CD4-positive, alpha-beta T cell (primary cell): ENCODE measurements at regions of chr1 and their contacts with region 1.

Region 1: DNA sequence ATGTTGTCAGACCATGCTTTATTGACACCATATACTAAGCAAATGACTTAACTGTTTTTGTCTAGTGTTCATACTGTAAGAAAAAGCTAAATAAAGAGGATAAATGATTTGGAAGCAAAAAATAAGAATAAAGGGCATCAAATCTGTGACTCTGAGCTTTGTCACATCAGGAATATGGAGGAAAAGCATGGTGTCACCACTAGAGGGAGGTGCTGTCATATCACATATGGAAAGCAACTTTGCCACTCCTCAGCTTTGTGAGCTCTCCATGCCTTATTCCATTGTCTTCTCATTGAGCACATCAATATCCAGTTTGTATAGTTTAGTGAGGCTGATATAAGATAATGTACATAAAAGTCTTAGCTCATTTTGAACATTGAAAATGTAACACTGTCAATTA is 20.8 kb upstream of the GBP1 start:
- DNase-seq: peak in 9 of 14 experiments; percentile 13 to 79 (median 48)
- ATAC-seq: peak; percentile 77
- H3K4me3 ChIP-seq: no peak overlapping the region
- H3K4me3 Mint-ChIP-seq: no peak overlapping the region
- H3K27ac ChIP-seq: no peak overlapping the region
- H3K27ac Mint-ChIP-seq: no peak overlapping the region
- H3K4me1 ChIP-seq: no peaks in the 10 kb centered on the region
- H3K4me1 Mint-ChIP-seq: no peaks in the 10 kb centered on the region
- H3K27me3 ChIP-seq: no peaks in the 10 kb centered on the region
- H3K27me3 Mint-ChIP-seq: no peaks in the 10 kb centered on the region
- CTCF ChIP-seq: peak; percentile 85

Region 2: GRCh38 chr1:88973520-88974137 is 112.2 kb before region 1 on chr1:
- CTCF ChIA-PET with region 1: interaction called, 11 read pairs
- POLR2A ChIA-PET with region 1: no interaction called
- intact Hi-C with region 1: no loop called
- DNase-seq: peak in 3 of 14 experiments; percentile 52 to 68 (median 62)
- ATAC-seq: peak; percentile 44
- H3K4me3 ChIP-seq: no peak overlapping the region
- H3K4me3 Mint-ChIP-seq: no peak overlapping the region
- H3K27ac ChIP-seq: no peak overlapping the region
- H3K27ac Mint-ChIP-seq: no peak overlapping the region
- H3K4me1 ChIP-seq: peaks cover 3% of the 10 kb centered on the region
- H3K4me1 Mint-ChIP-seq: peaks cover 25% of the 10 kb centered on the region
- H3K27me3 ChIP-seq: no peaks in the 10 kb centered on the region
- H3K27me3 Mint-ChIP-seq: no peaks in the 10 kb centered on the region
- CTCF ChIP-seq: peak; percentile 91

Region 3: GRCh38 chr1:88983791-88984559 is 101.8 kb before region 1 on chr1:
- CTCF ChIA-PET with region 1: interaction called, 13 read pairs
- POLR2A ChIA-PET with region 1: interaction called, 3 read pairs
- intact Hi-C with region 1: no loop called
- DNase-seq: peak in 6 of 14 experiments; percentile 23 to 82 (median 60)
- ATAC-seq: peak; percentile 88
- H3K4me3 ChIP-seq: peak overlapping the region; percentile 9
- H3K4me3 Mint-ChIP-seq: peak overlapping the region; percentile 8
- H3K27ac ChIP-seq: no peak overlapping the region
- H3K27ac Mint-ChIP-seq: peak overlapping the region; percentile 48
- H3K4me1 ChIP-seq: peaks cover 12% of the 10 kb centered on the region
- H3K4me1 Mint-ChIP-seq: peaks cover 72% of the 10 kb centered on the region
- H3K27me3 ChIP-seq: no peaks in the 10 kb centered on the region
- H3K27me3 Mint-ChIP-seq: no peaks in the 10 kb centered on the region
- CTCF ChIP-seq: peak; percentile 81

Region 4: DNA sequence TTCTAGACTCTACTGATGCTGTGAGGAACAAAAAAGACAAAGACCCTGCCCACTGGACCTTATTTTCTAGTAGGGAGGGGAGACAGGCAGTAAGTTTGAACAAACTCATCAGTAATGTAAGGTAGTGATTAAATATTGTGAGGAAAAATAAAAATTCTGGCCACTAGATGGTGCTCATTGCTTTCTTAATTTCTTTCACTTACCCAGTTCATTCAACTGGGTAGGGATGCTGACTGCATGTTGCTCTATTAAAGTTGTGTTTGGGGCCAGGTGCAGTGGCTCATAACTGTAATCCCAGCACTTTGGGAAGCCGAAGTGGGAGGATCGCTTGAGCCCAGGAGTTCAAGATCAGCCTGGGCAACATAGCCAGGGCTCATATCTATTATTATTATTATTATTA is 87.1 kb before region 1 on chr1:
- CTCF ChIA-PET with region 1: interaction called, 6 read pairs
- POLR2A ChIA-PET with region 1: no interaction called
- intact Hi-C with region 1: loop called (anchors 1 to 2 kb)
- DNase-seq: peak in 4 of 14 experiments; percentile 32 to 85 (median 84)
- ATAC-seq: peak; percentile 88
- H3K4me3 ChIP-seq: no peak overlapping the region
- H3K4me3 Mint-ChIP-seq: peak overlapping the region; percentile 50
- H3K27ac ChIP-seq: no peak overlapping the region
- H3K27ac Mint-ChIP-seq: no peak overlapping the region
- H3K4me1 ChIP-seq: peaks cover 12% of the 10 kb centered on the region
- H3K4me1 Mint-ChIP-seq: peaks cover 40% of the 10 kb centered on the region
- H3K27me3 ChIP-seq: no peaks in the 10 kb centered on the region
- H3K27me3 Mint-ChIP-seq: no peaks in the 10 kb centered on the region
- CTCF ChIP-seq: peak; percentile 64

Region 5: DNA sequence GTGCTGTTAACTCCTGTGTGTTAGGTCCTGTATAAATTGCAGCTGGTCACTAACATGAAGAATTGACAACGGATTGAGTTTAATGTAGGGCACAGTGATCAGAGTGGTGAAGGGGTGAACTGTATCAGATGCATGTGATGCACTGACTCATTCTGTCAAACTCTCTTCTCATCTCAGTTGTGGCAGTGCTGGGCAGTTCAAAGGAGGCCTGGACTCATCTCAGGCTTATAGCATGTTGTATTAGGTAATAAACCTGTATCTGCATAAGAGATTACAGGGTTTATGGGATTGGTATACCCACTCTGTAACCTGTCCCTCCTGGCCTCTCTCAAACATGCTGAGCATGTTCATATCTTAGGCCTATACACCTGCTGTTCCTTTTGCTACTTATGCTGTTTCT is 50.7 kb before region 1 on chr1:
- CTCF ChIA-PET with region 1: no interaction called
- POLR2A ChIA-PET with region 1: no interaction called
- intact Hi-C with region 1: no loop called
- DNase-seq: no peak
- ATAC-seq: no peak
- H3K4me3 ChIP-seq: no peak overlapping the region
- H3K4me3 Mint-ChIP-seq: no peak overlapping the region
- H3K27ac ChIP-seq: no peak overlapping the region
- H3K27ac Mint-ChIP-seq: peak overlapping the region; percentile 28
- H3K4me1 ChIP-seq: peaks cover 25% of the 10 kb centered on the region
- H3K4me1 Mint-ChIP-seq: peaks cover 80% of the 10 kb centered on the region
- H3K27me3 ChIP-seq: no peaks in the 10 kb centered on the region
- H3K27me3 Mint-ChIP-seq: no peaks in the 10 kb centered on the region
- CTCF ChIP-seq: no peak